Endothelial cell of umbilical vein (primary cell): ENCODE measurements at regions of chr4 and their contacts with region 1.

Region 1: DNA sequence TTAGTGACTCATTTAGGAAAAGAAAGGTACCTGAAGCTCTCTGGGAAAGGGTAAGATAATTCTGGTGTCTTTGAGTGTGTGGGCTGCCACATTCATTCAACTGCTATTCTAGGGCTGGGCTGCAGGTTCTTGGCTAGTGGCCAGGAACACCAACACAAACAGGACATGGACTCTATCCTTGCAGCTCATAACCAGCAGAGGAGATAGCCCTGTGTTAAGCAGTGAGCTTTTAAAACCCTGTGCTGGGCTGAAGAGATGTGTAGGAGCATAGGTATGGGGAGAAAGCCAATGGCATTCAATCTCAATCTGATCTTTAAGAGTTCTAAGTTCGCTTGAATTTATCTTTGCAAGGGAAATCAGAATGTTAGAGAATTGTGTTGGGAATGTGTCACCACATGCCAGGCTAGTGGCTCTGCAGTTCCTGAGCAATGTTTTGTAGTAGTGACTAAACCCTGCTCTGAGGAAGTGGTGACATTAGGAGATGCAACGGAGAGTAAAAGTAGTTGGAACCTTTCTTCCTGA is 39.2 kb downstream of the SGMS2 start:
- DNase-seq: peak; percentile 77
- H3K4me3 ChIP-seq: no peak overlapping the region
- H3K27ac ChIP-seq: peak overlapping the region; percentile 79
- H3K4me1 ChIP-seq: peaks cover 27% of the 10 kb centered on the region
- H3K27me3 ChIP-seq: no peaks in the 10 kb centered on the region
- CTCF ChIP-seq: no peak
- POLR2A ChIP-seq: no peak

Region 2: GRCh38 chr4:107492566-107492965 is 371.3 kb before region 1 on chr4:
- CTCF ChIA-PET with region 1: no interaction called
- POLR2A ChIA-PET with region 1: no interaction called
- dilution Hi-C with region 1: no loop called
- intact Hi-C with region 1: no loop called
- DNase-seq: no peak
- H3K4me3 ChIP-seq: no peak overlapping the region
- H3K27ac ChIP-seq: no peak overlapping the region
- H3K4me1 ChIP-seq: no peaks in the 10 kb centered on the region
- H3K27me3 ChIP-seq: no peaks in the 10 kb centered on the region
- CTCF ChIP-seq: no peak
- POLR2A ChIP-seq: no peak

Region 3: GRCh38 chr4:107853444-107854355 is 10.2 kb before region 1 on chr4:
- CTCF ChIA-PET with region 1: interaction called, 8 read pairs
- POLR2A ChIA-PET with region 1: no interaction called
- dilution Hi-C with region 1: no loop called
- intact Hi-C with region 1: loop called (anchors 1 kb)
- DNase-seq: peak; percentile 71
- H3K4me3 ChIP-seq: peak overlapping the region in 1 of 3 experiments; percentile 37
- H3K27ac ChIP-seq: peak overlapping the region; percentile 67
- H3K4me1 ChIP-seq: peaks cover 21% of the 10 kb centered on the region
- H3K27me3 ChIP-seq: no peaks in the 10 kb centered on the region
- CTCF ChIP-seq: no peak
- POLR2A ChIP-seq: no peak

Region 4: GRCh38 chr4:107913281-107913899 is 49.5 kb after region 1 on chr4:
- CTCF ChIA-PET with region 1: interaction called, 3 read pairs
- POLR2A ChIA-PET with region 1: no interaction called
- dilution Hi-C with region 1: no loop called
- intact Hi-C with region 1: loop called (anchors 2 kb)
- DNase-seq: peak; percentile 80
- H3K4me3 ChIP-seq: no peak overlapping the region
- H3K27ac ChIP-seq: no peak overlapping the region
- H3K4me1 ChIP-seq: no peaks in the 10 kb centered on the region
- H3K27me3 ChIP-seq: no peaks in the 10 kb centered on the region
- CTCF ChIP-seq: peak; percentile 45 to 49
- POLR2A ChIP-seq: no peak

Region 5: GRCh38 chr4:107939307-107939706 is 75.4 kb after region 1 on chr4:
- CTCF ChIA-PET with region 1: no interaction called
- POLR2A ChIA-PET with region 1: no interaction called
- dilution Hi-C with region 1: no loop called
- intact Hi-C with region 1: no loop called
- DNase-seq: no peak
- H3K4me3 ChIP-seq: no peak overlapping the region
- H3K27ac ChIP-seq: no peak overlapping the region
- H3K4me1 ChIP-seq: no peaks in the 10 kb centered on the region
- H3K27me3 ChIP-seq: no peaks in the 10 kb centered on the region
- CTCF ChIP-seq: no peak
- POLR2A ChIP-seq: no peak

Region 6: DNA sequence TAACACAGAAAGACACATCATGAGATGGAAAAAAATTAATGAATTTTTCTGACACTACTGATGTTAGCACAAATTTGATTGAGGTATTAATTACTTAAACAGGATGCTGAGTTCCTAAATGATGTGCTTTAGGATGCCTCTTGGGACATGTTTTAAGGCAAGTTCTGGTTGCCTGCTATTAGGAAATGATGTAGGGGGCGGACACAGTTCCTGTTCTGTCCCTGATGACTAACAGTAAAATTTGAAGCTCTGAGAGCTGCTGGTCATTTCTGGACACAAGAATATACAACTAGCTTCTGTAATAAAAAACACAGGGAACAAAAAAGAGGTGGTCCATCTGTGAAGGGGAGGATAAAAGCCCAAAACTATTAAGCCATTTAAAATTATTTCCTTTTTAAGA is 1062.2 kb after region 1 on chr4:
- CTCF ChIA-PET with region 1: no interaction called
- POLR2A ChIA-PET with region 1: no interaction called
- dilution Hi-C with region 1: no loop called
- intact Hi-C with region 1: no loop called
- DNase-seq: no peak
- H3K4me3 ChIP-seq: no peak overlapping the region
- H3K27ac ChIP-seq: no peak overlapping the region
- H3K4me1 ChIP-seq: no peaks in the 10 kb centered on the region
- H3K27me3 ChIP-seq: no peaks in the 10 kb centered on the region
- CTCF ChIP-seq: no peak
- POLR2A ChIP-seq: no peak